Naive thymus-derived CD4-positive, alpha-beta T cell (primary cell): ENCODE measurements at regions of chr12 and their contacts with region 1.

Region 1: DNA sequence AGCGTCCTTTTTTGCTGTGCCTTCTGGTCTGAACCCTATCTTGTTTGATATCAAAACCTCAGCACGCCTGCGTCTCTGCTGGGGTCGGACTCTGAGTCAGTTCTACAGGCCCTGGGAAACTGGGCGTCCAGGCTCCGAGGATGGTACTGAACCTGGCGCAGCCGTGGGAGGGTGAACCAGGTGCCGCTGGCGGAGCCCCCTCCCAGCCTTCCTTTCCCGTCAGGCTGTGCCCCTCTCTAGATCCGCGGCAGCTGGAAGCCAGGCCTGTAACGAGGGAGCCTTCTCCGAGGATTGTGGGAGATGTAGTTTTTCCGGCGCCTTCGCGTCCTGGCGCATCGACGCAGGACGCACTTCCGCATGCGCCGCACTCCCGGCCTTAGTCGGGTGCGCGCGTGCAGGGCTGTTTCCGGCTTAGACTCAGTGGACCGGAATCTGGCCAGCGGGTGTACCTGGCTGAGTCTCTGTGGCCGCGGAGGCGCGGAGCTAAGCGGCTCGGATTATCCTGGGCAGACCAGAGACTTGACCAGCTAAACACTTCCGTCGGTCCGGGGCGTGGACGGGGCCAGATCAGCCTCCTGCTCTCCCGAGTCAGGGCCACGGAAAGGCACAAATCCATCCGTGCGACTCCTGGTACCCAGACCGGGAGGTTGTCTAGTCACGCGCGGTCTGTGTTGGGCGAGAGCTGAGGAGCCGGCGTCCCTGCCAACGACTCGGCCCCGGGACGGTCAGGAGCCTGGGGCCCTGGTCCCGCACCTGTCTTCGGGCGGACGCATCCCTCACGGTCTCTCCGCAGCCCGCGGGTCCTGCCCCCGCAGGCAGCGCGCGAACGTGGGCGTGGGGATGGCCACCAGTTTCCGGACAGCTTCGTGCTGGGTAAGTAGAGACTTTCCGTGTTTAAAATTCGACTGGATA is at the start of gene ZNF26:
- DNase-seq: peak; percentile 66 to 90 (median 86)
- ATAC-seq: peak; percentile 99
- H3K4me3 ChIP-seq: peak within 1 kb of the TSS; percentile 96
- H3K4me3 Mint-ChIP-seq: peak within 1 kb of the TSS; percentile 84 to 98 (median 94)
- H3K27ac ChIP-seq: peak within 1 kb of the TSS; percentile 87
- H3K27ac Mint-ChIP-seq: peak within 1 kb of the TSS; percentile 90 to 98 (median 97)
- H3K4me1 ChIP-seq: peaks cover 11 to 12% of the 10 kb centered on the region in 2 donors
- H3K4me1 Mint-ChIP-seq: peaks cover 23 to 42% (median 39%) of the 10 kb centered on the region in 7 donors
- H3K27me3 ChIP-seq: no peaks in the 10 kb centered on the region
- H3K27me3 Mint-ChIP-seq: peaks cover 0 to 10% (median 4%) of the 10 kb centered on the region in 5 donors
- total RNA-seq, gene ZNF26: 16.0 to 38.8 (median 33.6) TPM

Region 2: DNA sequence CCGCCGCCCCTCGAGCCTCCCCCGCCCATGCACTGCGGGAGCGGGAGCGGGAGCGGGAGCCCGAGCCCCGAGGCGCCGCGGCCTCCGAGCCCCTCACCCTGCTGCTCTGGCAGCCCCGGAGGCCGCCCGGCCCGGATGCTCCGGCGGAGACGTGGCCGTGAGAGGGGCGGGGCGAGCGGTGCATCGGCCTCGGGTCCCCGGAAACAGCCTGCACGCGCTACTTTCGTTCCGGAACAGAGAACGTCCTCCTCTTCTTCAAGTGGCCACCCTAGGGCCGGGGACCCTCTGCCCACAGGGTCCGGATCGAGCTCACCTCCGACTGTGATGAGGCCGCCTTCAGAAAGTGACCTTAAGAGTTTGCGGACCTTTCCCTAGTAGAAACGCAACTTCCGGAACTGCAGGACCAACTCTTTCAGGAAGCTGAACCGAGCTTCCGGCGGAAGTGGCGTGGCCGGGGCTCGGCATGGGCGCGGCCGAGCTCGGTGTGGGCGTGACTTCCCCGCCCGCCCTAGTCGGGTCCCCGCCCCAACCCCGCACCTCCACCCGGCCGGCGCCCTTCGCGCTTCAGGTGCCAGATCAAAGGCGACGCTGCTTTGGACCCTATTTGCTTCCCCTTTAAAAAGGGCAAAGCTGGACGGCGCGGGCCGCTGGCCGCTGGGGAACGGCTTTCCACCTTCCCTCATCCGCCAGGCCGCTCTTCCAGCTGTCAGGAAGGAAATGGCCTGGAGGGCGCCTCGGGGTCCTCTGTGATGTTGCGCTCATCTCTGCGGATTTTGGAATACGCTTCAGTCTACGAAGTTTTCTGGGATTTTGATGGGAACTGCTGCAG is 157.3 kb before region 1 on chr12 and contains the start of gene GOLGA3:
- CTCF ChIA-PET with region 1: no interaction called
- POLR2A ChIA-PET with region 1: interaction called, 5 read pairs
- intact Hi-C with region 1: loop called in 1 of 2 experiments (anchors 2 kb)
- DNase-seq: peak; percentile 92 to 98 (median 95)
- ATAC-seq: peak; percentile 96
- H3K4me3 ChIP-seq: peak within 1 kb of the TSS; percentile 95
- H3K4me3 Mint-ChIP-seq: peak within 1 kb of the TSS; percentile 92 to 98 (median 96)
- H3K27ac ChIP-seq: peak within 1 kb of the TSS; percentile 99
- H3K27ac Mint-ChIP-seq: peak within 1 kb of the TSS; percentile 98 to 100 (median 100)
- H3K4me1 ChIP-seq: peaks cover 8 to 25% of the 10 kb centered on the region in 2 donors
- H3K4me1 Mint-ChIP-seq: peaks cover 28 to 69% (median 58%) of the 10 kb centered on the region in 7 donors
- H3K27me3 ChIP-seq: no peaks in the 10 kb centered on the region
- H3K27me3 Mint-ChIP-seq: peaks cover 0 to 3% (median 0%) of the 10 kb centered on the region in 5 donors
- total RNA-seq, gene GOLGA3: 46.3 to 65.7 (median 63.6) TPM

Region 3: DNA sequence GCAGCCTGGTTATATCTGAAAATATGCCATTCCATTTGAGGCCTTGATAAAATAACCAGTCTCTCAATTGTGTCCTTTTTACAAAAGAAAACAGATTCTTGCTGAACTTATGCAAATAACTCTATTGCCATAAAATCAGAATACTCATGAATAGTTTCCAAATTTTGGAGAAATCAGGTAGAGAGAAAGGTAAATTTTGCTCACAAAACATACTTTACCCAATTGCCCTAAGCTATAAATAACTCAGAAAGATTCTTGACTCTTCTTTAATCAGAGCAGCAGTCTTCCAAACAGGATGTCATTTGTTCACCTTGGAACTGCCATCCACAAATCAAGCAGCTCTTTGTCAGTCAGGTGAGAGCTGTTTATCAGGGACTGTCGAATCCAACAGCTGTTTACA is 12.5 kb after region 1 on chr12:
- CTCF ChIA-PET with region 1: no interaction called
- POLR2A ChIA-PET with region 1: interaction called, 10 read pairs
- intact Hi-C with region 1: no loop called
- DNase-seq: no peak
- ATAC-seq: no peak
- H3K4me3 ChIP-seq: peak overlapping the region; percentile 9
- H3K4me3 Mint-ChIP-seq: no peak overlapping the region
- H3K27ac ChIP-seq: no peak overlapping the region
- H3K27ac Mint-ChIP-seq: no peak overlapping the region
- H3K4me1 ChIP-seq: no peaks in the 10 kb centered on the region
- H3K4me1 Mint-ChIP-seq: peaks cover 0 to 18% (median 8%) of the 10 kb centered on the region in 7 donors
- H3K27me3 ChIP-seq: no peaks in the 10 kb centered on the region
- H3K27me3 Mint-ChIP-seq: no peaks in the 10 kb centered on the region

Region 4: GRCh38 chr12:133080368-133081158 is 94.3 kb after region 1 on chr12 and contains the start of gene ZNF140:
- CTCF ChIA-PET with region 1: no interaction called
- POLR2A ChIA-PET with region 1: interaction called, 21 read pairs
- intact Hi-C with region 1: loop called (anchors 1 kb)
- DNase-seq: peak; percentile 91 to 97 (median 96)
- ATAC-seq: peak; percentile 77
- H3K4me3 ChIP-seq: peak within 1 kb of the TSS; percentile 94
- H3K4me3 Mint-ChIP-seq: no peak within 1 kb of the TSS
- H3K27ac ChIP-seq: peak within 1 kb of the TSS; percentile 100
- H3K27ac Mint-ChIP-seq: peak within 1 kb of the TSS in 1 of 9 donors; percentile 41
- H3K4me1 ChIP-seq: peaks cover 7 to 11% of the 10 kb centered on the region in 2 donors
- H3K4me1 Mint-ChIP-seq: peaks cover 0 to 22% (median 10%) of the 10 kb centered on the region in 7 donors
- H3K27me3 ChIP-seq: no peaks in the 10 kb centered on the region
- H3K27me3 Mint-ChIP-seq: no peaks in the 10 kb centered on the region
- total RNA-seq, gene ZNF140: 11.2 to 29.9 (median 16.0) TPM

Region 5: GRCh38 chr12:133181238-133181959 is 195.1 kb after region 1 on chr12 and contains the start of gene ZNF268:
- CTCF ChIA-PET with region 1: no interaction called
- POLR2A ChIA-PET with region 1: interaction called, 10 read pairs
- intact Hi-C with region 1: loop called (anchors 1 kb)
- DNase-seq: peak; percentile 75 to 90 (median 86)
- ATAC-seq: peak; percentile 99
- H3K4me3 ChIP-seq: peak within 1 kb of the TSS; percentile 100
- H3K4me3 Mint-ChIP-seq: peak within 1 kb of the TSS; percentile 90 to 99 (median 95)
- H3K27ac ChIP-seq: peak within 1 kb of the TSS; percentile 84
- H3K27ac Mint-ChIP-seq: peak within 1 kb of the TSS; percentile 85 to 97 (median 92)
- H3K4me1 ChIP-seq: peaks cover 7 to 9% of the 10 kb centered on the region in 2 donors
- H3K4me1 Mint-ChIP-seq: peaks cover 16 to 34% (median 31%) of the 10 kb centered on the region in 7 donors
- H3K27me3 ChIP-seq: no peaks in the 10 kb centered on the region
- H3K27me3 Mint-ChIP-seq: no peaks in the 10 kb centered on the region
- total RNA-seq, gene ZNF268: 13.6 to 38.6 (median 18.6) TPM